Activated CD4-positive, alpha-beta memory T cell treated with anti-CD3 and anti-CD28 coated beads for 36 hours (primary cell): ENCODE measurements at regions of chr20 and their contacts with region 1.

Region 1: GRCh38 chr20:51412991-51413481 is 129.5 kb downstream of the NFATC2 start:
- DNase-seq: no peak
- H3K4me3 Mint-ChIP-seq: no peak overlapping the region
- H3K27ac Mint-ChIP-seq: no peak overlapping the region
- H3K4me1 Mint-ChIP-seq: peaks cover 87% of the 10 kb centered on the region
- H3K27me3 Mint-ChIP-seq: no peaks in the 10 kb centered on the region

Region 2: GRCh38 chr20:51345601-51346101 is 67.4 kb before region 1 on chr20:
- CTCF ChIA-PET with region 1: no interaction called
- POLR2A ChIA-PET with region 1: no interaction called
- intact Hi-C with region 1: no loop called
- DNase-seq: no peak
- H3K4me3 Mint-ChIP-seq: no peak overlapping the region
- H3K27ac Mint-ChIP-seq: no peak overlapping the region
- H3K4me1 Mint-ChIP-seq: no peaks in the 10 kb centered on the region
- H3K27me3 Mint-ChIP-seq: no peaks in the 10 kb centered on the region

Region 3: GRCh38 chr20:51385646-51386530 is 27.1 kb before region 1 on chr20:
- CTCF ChIA-PET with region 1: interaction called, 13 read pairs
- POLR2A ChIA-PET with region 1: interaction called, 3 read pairs
- intact Hi-C with region 1: no loop called
- DNase-seq: peak; percentile 50
- H3K4me3 Mint-ChIP-seq: no peak overlapping the region
- H3K27ac Mint-ChIP-seq: no peak overlapping the region
- H3K4me1 Mint-ChIP-seq: peaks cover 73% of the 10 kb centered on the region
- H3K27me3 Mint-ChIP-seq: no peaks in the 10 kb centered on the region